ENCODE measurements at regions of chr17 and their contacts with region 1.

Region 1: GRCh38 chr17:29219378-29220047 is 27.1 kb upstream of the CRYBA1 start:
- DNase-seq: peak; percentile 63
- ATAC-seq: peak; percentile 98
- H3K4me3 ChIP-seq: no peak overlapping the region
- H3K27ac ChIP-seq: 0 out of 2 replicates have a peak overlapping the region, but pooled peaks have one; percentile 3
- H3K4me1 ChIP-seq: peaks cover 0 to 9% of the 10 kb centered on the region in 2 experiments; a peak in 1 of 4 replicates
- H3K27me3 ChIP-seq: no peaks in the 10 kb centered on the region
- CTCF ChIP-seq: peak; percentile 93 to 98 (median 97)
- POLR2A ChIP-seq: no peak
- RAD21 ChIP-seq: peak; percentile 90

Region 2: GRCh38 chr17:29124117-29124924 is 95.2 kb before region 1 on chr17:
- CTCF ChIA-PET with region 1: interaction called, 32 read pairs
- POLR2A ChIA-PET with region 1: no interaction called
- RAD21 ChIA-PET with region 1: interaction called in 1 of 2 experiments, 10 read pairs
- intact Hi-C with region 1: no loop called
- DNase-seq: no peak
- ATAC-seq: peak; percentile 91
- H3K4me3 ChIP-seq: no peak overlapping the region
- H3K27ac ChIP-seq: no peak overlapping the region; the same call in 1 of the 2 replicates
- H3K4me1 ChIP-seq: peaks cover 14 to 21% of the 10 kb centered on the region in 2 experiments; a peak in 3 of 4 replicates
- H3K27me3 ChIP-seq: no peaks in the 10 kb centered on the region
- CTCF ChIP-seq: peak; percentile 66 to 92 (median 78)
- POLR2A ChIP-seq: no peak
- RAD21 ChIP-seq: peak; percentile 95

Region 3: GRCh38 chr17:29172589-29172988 is 46.9 kb before region 1 on chr17:
- CTCF ChIA-PET with region 1: no interaction called
- POLR2A ChIA-PET with region 1: no interaction called
- RAD21 ChIA-PET with region 1: no interaction called
- intact Hi-C with region 1: no loop called
- DNase-seq: no peak
- ATAC-seq: no peak
- H3K4me3 ChIP-seq: no peak overlapping the region
- H3K27ac ChIP-seq: no peak overlapping the region
- H3K4me1 ChIP-seq: peaks cover 13 to 32% of the 10 kb centered on the region in 2 experiments
- H3K27me3 ChIP-seq: no peaks in the 10 kb centered on the region
- CTCF ChIP-seq: no peak
- POLR2A ChIP-seq: no peak
- RAD21 ChIP-seq: no peak

Region 4: DNA sequence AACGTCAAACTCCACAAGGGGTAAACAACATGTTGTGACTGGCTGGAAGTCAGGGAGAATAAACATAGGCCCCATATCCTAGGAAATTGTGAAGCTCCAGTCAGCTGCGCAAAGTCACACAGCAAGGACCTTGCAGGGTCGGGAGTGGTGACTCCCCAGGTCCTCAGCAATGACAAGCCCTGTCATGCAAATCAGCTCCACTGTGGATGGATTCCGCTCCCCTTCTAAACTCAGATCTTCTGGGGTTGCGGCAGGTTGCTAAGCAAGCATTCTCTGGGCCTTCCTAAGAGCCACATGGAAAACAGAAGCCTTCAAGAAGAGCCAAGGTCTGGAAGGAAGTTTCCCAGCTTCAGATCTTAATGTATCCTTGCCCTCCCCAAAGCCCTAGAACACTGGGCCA is 10.4 kb before region 1 on chr17:
- CTCF ChIA-PET with region 1: interaction called, 10 read pairs
- POLR2A ChIA-PET with region 1: no interaction called
- RAD21 ChIA-PET with region 1: no interaction called
- intact Hi-C with region 1: no loop called
- DNase-seq: no peak
- ATAC-seq: no peak
- H3K4me3 ChIP-seq: no peak overlapping the region
- H3K27ac ChIP-seq: no peak overlapping the region
- H3K4me1 ChIP-seq: no peaks in the 10 kb centered on the region
- H3K27me3 ChIP-seq: no peaks in the 10 kb centered on the region
- CTCF ChIP-seq: no peak
- POLR2A ChIP-seq: no peak
- RAD21 ChIP-seq: no peak